ENCODE measurements at regions of chr1 and their contacts with region 1.

Region 1: DNA sequence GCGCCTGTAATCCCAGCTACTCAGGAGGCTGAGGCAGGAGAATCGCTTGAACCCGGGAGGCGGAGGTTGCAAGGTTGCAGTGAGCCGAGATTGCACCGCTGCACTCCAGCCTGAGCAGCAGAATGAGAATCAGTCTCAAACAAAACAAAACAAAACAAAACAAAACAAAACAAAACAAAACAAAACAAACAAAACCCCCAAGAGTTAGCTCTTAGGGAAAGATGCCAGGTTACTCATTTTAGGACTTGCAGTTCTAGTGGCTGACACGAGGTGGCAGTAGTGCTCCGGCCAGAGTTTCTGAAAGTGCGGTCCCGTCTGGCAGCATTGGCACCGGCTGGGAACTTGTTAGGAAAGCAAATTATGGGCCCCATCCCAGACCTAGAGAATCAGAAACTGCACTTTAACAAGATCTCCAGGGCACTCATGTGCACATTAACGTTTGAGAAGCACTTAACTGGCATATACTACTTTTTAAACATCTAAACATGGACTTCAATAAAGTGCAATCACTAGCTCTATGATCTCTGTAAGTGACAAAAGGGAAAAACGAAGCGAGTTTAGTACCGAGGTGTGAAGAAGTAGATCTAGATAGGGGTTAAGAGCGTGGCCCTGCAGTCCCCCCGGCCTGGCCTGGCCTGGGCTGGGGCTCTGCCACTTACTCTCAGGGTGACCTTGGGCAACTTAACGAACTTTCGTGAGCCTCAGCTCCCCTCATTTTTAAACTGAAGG is 41.9 kb upstream of the TNFRSF1B start:
- DNase-seq: peak; percentile 85
- ATAC-seq: peak; percentile 92
- H3K4me3 ChIP-seq: no peak overlapping the region
- H3K27ac ChIP-seq: no peak overlapping the region
- H3K4me1 ChIP-seq: peaks cover 15% of the 10 kb centered on the region
- H3K27me3 ChIP-seq: no peaks in the 10 kb centered on the region
- CTCF ChIP-seq: peak; percentile 93

Region 2: GRCh38 chr1:12208764-12209494 is 84.1 kb after region 1 on chr1:
- intact Hi-C with region 1: loop called (anchors 5 kb)
- DNase-seq: peak; percentile 90
- ATAC-seq: peak; percentile 94
- H3K4me3 ChIP-seq: no peak overlapping the region
- H3K27ac ChIP-seq: no peak overlapping the region
- H3K4me1 ChIP-seq: peaks cover 8% of the 10 kb centered on the region
- H3K27me3 ChIP-seq: no peaks in the 10 kb centered on the region
- CTCF ChIP-seq: peak; percentile 91

Region 3: GRCh38 chr1:13487143-13487868 is 1362.4 kb after region 1 on chr1:
- intact Hi-C with region 1: no loop called
- DNase-seq: no peak
- ATAC-seq: no peak
- H3K4me3 ChIP-seq: no peak overlapping the region
- H3K27ac ChIP-seq: no peak overlapping the region
- H3K4me1 ChIP-seq: no peaks in the 10 kb centered on the region
- H3K27me3 ChIP-seq: no peaks in the 10 kb centered on the region
- CTCF ChIP-seq: no peak

Measured in upper lobe of right lung (tissue), 1 donor.